HepG2 (cell line): ENCODE measurements at regions of chr7 and their contacts with region 1.

Region 1: GRCh38 chr7:95794917-95795515 is 22.7 kb downstream of the DYNC1I1 start:
- DNase-seq: peak; percentile 24
- ATAC-seq: peak; percentile 62; the same call in 2 of the 3 replicates
- H3K4me3 ChIP-seq: no peak overlapping the region
- H3K27ac ChIP-seq: no peak overlapping the region
- H3K4me1 ChIP-seq: no peaks in the 10 kb centered on the region
- H3K27me3 ChIP-seq: no peaks in the 10 kb centered on the region
- CTCF ChIP-seq: peak; percentile 50
- EP300 ChIP-seq: no peak
- POLR2A ChIP-seq: no peak
- RAD21 ChIP-seq: no peak

Region 2: GRCh38 chr7:95811846-95812445 is 16.9 kb after region 1 on chr7:
- CTCF ChIA-PET with region 1: no interaction called
- POLR2A ChIA-PET with region 1: no interaction called
- in situ Hi-C with region 1: no loop called
- intact Hi-C with region 1: no loop called
- DNase-seq: no peak
- ATAC-seq: no peak
- H3K4me3 ChIP-seq: no peak overlapping the region
- H3K27ac ChIP-seq: no peak overlapping the region
- H3K4me1 ChIP-seq: no peaks in the 10 kb centered on the region
- H3K27me3 ChIP-seq: peaks cover 0 to 3% of the 10 kb centered on the region in 2 experiments; a peak in 1 of 5 replicates
- CTCF ChIP-seq: no peak
- EP300 ChIP-seq: no peak
- POLR2A ChIP-seq: no peak
- RAD21 ChIP-seq: no peak

Region 3: DNA sequence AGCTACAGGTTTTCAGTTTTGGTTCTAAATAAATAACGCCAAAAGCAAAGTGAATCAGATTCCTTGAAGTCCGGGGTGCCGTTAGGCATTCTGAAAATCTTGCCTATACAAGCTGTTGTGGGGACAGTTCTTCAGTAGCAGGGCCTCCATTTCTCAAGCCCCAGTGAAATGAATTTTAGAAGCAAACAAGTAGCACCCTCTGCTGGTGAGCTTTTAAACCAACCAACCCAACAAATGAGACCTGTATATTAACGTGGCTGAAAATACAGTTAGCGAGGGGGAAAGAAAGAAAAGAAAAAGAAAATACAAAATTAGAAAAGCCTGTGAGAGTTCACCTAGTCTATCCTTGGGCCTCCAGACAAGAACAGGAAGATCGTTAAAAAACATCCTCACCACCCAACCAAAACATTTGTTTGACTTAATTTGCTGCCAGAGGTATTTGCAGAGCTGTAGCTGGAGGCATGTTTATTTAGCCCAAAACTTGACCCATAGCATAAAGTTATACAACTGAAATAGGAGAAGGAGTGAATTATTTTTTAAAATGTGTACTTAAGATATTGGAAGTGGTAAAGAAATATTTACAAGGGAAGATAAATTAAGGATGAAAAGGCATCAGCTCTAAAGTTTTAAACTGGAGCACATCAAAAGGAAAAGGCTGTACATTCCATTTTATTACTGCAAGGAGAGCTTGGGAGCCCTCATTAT is 76.2 kb after region 1 on chr7:
- CTCF ChIA-PET with region 1: no interaction called
- POLR2A ChIA-PET with region 1: no interaction called
- in situ Hi-C with region 1: no loop called
- intact Hi-C with region 1: loop called (anchors 1 kb)
- DNase-seq: peak; percentile 43
- ATAC-seq: peak; percentile 71
- H3K4me3 ChIP-seq: no peak overlapping the region
- H3K27ac ChIP-seq: no peak overlapping the region
- H3K4me1 ChIP-seq: no peaks in the 10 kb centered on the region
- H3K27me3 ChIP-seq: no peaks in the 10 kb centered on the region
- CTCF ChIP-seq: peak; percentile 68
- EP300 ChIP-seq: no peak
- POLR2A ChIP-seq: no peak
- RAD21 ChIP-seq: peak; percentile 37; the same call in 1 of the 2 replicates